Sciatic nerve (tissue), 2 donors: ENCODE measurements at regions of chr9 and their contacts with region 1.

Region 1: DNA sequence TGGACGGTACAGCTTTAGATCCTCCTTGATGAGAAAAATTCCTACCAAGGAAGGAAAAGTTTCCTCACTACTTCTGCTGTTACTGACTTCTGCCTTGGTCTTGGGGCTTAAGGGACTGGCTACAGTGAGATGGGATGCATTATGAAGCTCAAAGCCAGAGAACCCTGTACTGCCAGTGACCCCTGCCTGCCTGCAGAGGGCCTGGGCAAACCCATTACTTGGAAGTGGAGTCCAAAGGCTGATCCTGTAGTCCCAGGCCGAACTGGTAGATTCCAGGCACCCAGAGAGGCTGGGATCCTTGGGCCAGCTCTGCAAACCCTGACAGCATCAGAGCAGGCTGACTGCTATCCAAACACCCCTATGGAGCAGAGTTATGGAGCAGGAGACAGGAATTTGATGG is 25.7 kb upstream of the NR5A1 start:
- DNase-seq: no peak
- ATAC-seq: no peak

Region 2: DNA sequence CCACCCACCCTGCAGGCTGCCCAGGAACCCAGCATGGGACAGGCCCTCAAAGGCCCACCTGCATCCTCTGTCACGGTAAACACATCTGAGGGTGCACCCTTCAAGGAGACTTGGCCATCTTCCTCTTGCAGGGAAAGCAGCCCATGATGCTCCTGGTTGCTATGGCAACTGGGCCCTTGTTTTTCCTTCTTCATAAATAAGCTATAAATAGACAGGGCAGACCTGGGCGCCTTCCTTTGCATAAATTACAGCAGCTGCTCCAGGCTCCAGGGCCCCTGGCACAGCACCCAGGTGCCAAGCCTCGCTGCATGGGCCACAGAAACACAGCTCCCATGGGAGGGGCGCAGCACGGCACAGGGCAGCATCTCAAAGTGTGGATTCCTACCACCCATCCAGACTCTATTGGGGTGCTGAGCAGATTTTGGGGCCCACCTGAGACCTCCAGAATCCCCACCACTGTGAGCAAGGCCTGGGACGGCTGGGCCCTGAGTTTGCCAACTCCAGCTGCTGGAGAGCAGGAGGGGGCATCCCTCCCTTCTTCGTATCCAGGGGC is 111.8 kb before region 1 on chr9:
- intact Hi-C with region 1: loop called (anchors 10 kb)
- DNase-seq: no peak
- ATAC-seq: no peak

Region 3: DNA sequence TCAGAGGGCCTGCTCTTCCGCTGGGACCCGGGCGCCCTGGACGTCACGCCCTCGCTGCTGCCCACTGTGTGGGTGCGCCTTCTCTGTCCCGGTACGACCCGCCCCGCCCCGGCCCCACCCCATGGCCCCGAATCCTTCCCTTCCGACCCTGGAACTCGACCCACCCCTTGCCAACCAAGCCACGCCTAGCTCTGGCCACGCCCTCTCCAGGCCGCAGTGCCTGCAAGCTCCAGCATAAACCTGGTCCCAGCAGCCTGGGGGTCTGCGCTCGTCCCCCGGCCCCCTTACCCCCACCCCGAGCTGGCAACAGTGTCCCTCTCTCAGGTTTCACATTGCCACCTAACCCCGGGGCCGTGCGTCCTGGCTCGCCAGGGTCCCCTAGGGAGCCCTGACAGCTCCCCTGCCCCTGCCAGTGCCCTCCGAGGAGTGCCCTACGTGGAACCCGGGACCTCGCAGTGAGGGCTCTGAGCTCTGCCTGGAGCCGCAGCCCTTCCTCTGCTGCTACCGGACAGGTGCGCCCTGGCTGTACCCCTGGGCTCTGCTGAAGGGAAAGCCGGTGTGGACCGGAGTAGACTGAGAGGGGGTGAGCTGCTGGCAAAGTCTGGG is 79.2 kb before region 1 on chr9:
- intact Hi-C with region 1: no loop called
- DNase-seq: no peak
- ATAC-seq: no peak